ENCODE measurements at regions of chr13 and their contacts with region 1.

Region 1: GRCh38 chr13:44969551-44970484 is 19.5 kb downstream of the NUFIP1 start:
- DNase-seq: no peak
- H3K4me3 ChIP-seq: peak overlapping the region in 1 of 2 donors; percentile 8
- H3K27ac ChIP-seq: peak overlapping the region; percentile 35 to 62
- H3K4me1 ChIP-seq: peaks cover 0 to 12% of the 10 kb centered on the region in 2 donors
- H3K27me3 ChIP-seq: no peaks in the 10 kb centered on the region
- CTCF ChIP-seq: peak; percentile 79 to 83 (median 79)

Region 2: GRCh38 chr13:43905435-43906031 is 1064.3 kb before region 1 on chr13:
- intact Hi-C with region 1: loop called (anchors 5 kb)
- DNase-seq: no peak
- H3K4me3 ChIP-seq: no peak overlapping the region
- H3K27ac ChIP-seq: no peak overlapping the region
- H3K4me1 ChIP-seq: no peaks in the 10 kb centered on the region
- H3K27me3 ChIP-seq: no peaks in the 10 kb centered on the region
- CTCF ChIP-seq: peak; percentile 74 to 87 (median 79)

Region 3: GRCh38 chr13:44484562-44485138 is 485.2 kb before region 1 on chr13:
- intact Hi-C with region 1: loop called (anchors 2 kb)
- DNase-seq: no peak
- H3K4me3 ChIP-seq: peak overlapping the region in 1 of 2 donors; percentile 27
- H3K27ac ChIP-seq: no peak overlapping the region
- H3K4me1 ChIP-seq: peaks cover 0 to 15% of the 10 kb centered on the region in 2 donors
- H3K27me3 ChIP-seq: no peaks in the 10 kb centered on the region
- CTCF ChIP-seq: no peak

Region 4: GRCh38 chr13:44710576-44710975 is 259.2 kb before region 1 on chr13:
- intact Hi-C with region 1: loop called (anchors 10 kb)
- DNase-seq: no peak
- H3K4me3 ChIP-seq: no peak overlapping the region
- H3K27ac ChIP-seq: peak overlapping the region; percentile 74 to 88
- H3K4me1 ChIP-seq: peaks cover 0 to 50% of the 10 kb centered on the region in 2 donors
- H3K27me3 ChIP-seq: no peaks in the 10 kb centered on the region
- CTCF ChIP-seq: no peak

Region 5: DNA sequence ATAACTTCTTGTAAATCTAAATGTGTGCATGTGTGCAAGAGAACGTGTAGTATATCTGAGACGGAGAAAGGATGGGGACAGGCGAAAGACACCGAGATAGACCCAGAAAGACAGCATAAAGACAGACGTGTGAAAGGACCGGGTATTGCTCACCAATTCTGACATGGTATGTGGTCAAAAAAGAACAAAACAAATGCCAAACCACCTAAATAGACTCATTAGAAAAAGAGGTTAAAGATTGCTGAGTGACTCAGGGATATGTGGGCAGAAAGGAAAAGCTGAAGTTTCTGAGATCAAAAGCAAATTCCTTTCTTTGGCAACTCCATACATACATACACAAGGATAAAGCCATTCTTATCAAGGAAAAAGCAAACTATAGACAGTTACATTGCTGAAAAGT is 213.9 kb before region 1 on chr13:
- intact Hi-C with region 1: no loop called
- DNase-seq: no peak
- H3K4me3 ChIP-seq: no peak overlapping the region
- H3K27ac ChIP-seq: no peak overlapping the region
- H3K4me1 ChIP-seq: peaks cover 0 to 3% of the 10 kb centered on the region in 2 donors
- H3K27me3 ChIP-seq: no peaks in the 10 kb centered on the region
- CTCF ChIP-seq: no peak

Region 6: GRCh38 chr13:44930963-44931623 is 38.7 kb before region 1 on chr13:
- intact Hi-C with region 1: loop called (anchors 5 kb)
- DNase-seq: no peak
- H3K4me3 ChIP-seq: no peak overlapping the region
- H3K27ac ChIP-seq: peak overlapping the region; percentile 68 to 79
- H3K4me1 ChIP-seq: peaks cover 7 to 36% of the 10 kb centered on the region in 2 donors
- H3K27me3 ChIP-seq: no peaks in the 10 kb centered on the region
- CTCF ChIP-seq: no peak

Region 7: GRCh38 chr13:45132369-45133064 is 162.7 kb after region 1 on chr13:
- intact Hi-C with region 1: no loop called
- DNase-seq: no peak
- H3K4me3 ChIP-seq: no peak overlapping the region
- H3K27ac ChIP-seq: no peak overlapping the region
- H3K4me1 ChIP-seq: no peaks in the 10 kb centered on the region
- H3K27me3 ChIP-seq: no peaks in the 10 kb centered on the region
- CTCF ChIP-seq: no peak

Region 8: GRCh38 chr13:45340422-45340925 is 370.7 kb after region 1 on chr13:
- intact Hi-C with region 1: no loop called
- DNase-seq: peak; percentile 69 to 96
- H3K4me3 ChIP-seq: peak overlapping the region; percentile 90 to 93
- H3K27ac ChIP-seq: peak overlapping the region; percentile 99 to 100
- H3K4me1 ChIP-seq: peaks cover 6 to 36% of the 10 kb centered on the region in 2 donors
- H3K27me3 ChIP-seq: no peaks in the 10 kb centered on the region
- CTCF ChIP-seq: peak; percentile 42 to 84 (median 46)